ENCODE measurements at regions of chr11 and their contacts with region 1.

Region 1: DNA sequence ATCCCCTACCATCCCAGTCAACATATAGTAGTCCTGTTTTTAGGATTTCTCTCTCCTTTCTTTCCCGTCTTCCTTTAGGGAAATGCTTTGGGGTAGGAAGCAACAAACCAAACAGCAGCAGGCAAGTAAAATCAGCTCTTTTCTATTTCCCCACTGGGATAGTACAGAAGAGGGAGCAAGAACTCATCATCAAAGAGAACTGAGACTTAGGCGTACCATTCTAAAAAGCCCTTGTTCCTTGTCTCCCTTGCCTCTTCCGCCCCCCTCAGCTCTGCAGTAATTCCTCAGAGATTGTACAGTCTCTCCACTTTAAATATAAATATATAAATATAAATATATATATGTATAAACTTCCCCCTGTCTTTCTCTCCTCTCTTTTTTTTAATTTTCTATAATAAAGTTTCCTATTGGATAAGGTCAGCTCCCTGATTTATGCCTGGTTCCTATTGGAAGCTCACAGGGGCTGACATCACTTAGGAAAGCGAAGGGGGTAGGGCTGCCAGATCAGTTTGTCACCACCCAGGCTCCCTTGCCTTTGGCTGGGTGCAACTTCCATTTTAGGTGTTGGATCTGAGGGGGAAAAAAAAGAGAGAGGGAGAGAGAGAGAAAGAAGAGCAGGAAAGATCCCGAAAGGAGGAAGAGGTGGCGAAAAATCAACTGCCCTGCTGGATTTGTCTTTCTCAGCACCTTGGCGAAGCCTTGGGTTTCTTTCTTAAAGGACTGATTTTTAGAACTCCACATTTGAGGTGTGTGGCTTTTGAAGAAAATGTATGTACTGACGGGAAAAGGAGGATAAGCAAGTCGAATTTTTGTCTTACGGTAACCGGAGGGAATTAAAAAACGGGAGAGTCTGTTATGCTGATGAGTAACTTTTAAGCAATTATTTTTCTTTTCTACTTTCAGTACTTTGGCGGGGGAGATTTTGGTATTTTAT is at the start of gene CTNND1:
- DNase-seq: peak; percentile 75 to 93
- ATAC-seq: peak; percentile 96 to 99 (median 99)
- H3K4me3 ChIP-seq: peak within 1 kb of the TSS; percentile 4 to 84 (median 70)
- H3K27ac ChIP-seq: peak within 1 kb of the TSS; percentile 59 to 98 (median 94)
- H3K4me1 ChIP-seq: peaks cover 10 to 40% (median 27%) of the 10 kb centered on the region in 9 donors
- H3K27me3 ChIP-seq: no peaks in the 10 kb centered on the region
- CTCF ChIP-seq: peak in 1 of 9 donors; percentile 16
- total RNA-seq, gene CTNND1: 56.7 to 85.6 (median 65.2) TPM

Region 2: DNA sequence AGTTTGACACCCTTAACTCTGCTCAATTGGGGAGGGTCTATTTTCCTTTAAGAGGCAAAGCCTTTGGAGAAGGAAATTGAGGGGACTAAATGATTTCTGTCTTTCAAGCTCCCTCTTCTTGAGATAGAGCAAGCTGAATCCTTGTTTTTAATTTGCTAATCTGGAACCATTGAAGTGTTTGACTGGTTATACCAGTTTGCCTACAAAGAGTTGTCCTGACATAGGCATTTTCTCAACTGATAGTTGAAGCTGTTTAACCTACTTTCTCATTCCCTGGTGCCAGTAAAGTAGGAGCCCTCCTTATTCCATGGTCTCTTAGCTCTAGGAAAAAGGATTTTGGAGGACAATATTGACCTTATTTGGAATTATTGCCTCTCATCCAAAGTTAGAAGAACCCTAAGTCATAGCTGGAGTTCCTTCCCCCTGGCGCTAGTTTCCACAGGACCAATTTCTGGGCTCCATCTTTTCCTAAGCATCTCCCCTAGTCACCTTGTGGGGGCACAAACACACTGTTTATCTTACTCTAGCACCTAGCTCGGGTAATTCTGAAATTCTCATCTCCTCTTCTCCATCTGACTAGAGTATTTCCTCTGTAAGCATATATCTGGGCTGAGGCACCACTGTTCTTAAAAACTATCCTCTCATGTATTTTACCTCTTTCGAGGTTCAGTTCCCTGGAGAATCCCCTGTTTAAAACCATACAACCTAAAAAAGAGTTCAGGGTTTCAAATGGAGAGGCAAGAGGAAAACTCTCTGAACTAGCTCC is 86.2 kb before region 1 on chr11:
- intact Hi-C with region 1: no loop called
- DNase-seq: no peak
- ATAC-seq: no peak
- H3K4me3 ChIP-seq: no peak overlapping the region
- H3K27ac ChIP-seq: no peak overlapping the region
- H3K4me1 ChIP-seq: peaks cover 0 to 41% (median 17%) of the 10 kb centered on the region in 9 donors
- H3K27me3 ChIP-seq: no peaks in the 10 kb centered on the region
- CTCF ChIP-seq: no peak

Region 3: GRCh38 chr11:57741132-57742086 is 20.2 kb before region 1 on chr11 and contains the start of gene SELENOH:
- intact Hi-C with region 1: loop called in 1 of 10 experiments (anchors 1 kb)
- DNase-seq: peak; percentile 93 to 95
- ATAC-seq: peak; percentile 97 to 99 (median 98)
- H3K4me3 ChIP-seq: peak within 1 kb of the TSS; percentile 69 to 95 (median 84)
- H3K27ac ChIP-seq: peak within 1 kb of the TSS; percentile 90 to 99 (median 96)
- H3K4me1 ChIP-seq: peaks cover 2 to 32% (median 23%) of the 10 kb centered on the region in 9 donors
- H3K27me3 ChIP-seq: no peaks in the 10 kb centered on the region
- CTCF ChIP-seq: peak in 1 of 9 donors; percentile 8
- total RNA-seq, gene SELENOH: 69.8 to 99.0 (median 77.5) TPM

Region 4: DNA sequence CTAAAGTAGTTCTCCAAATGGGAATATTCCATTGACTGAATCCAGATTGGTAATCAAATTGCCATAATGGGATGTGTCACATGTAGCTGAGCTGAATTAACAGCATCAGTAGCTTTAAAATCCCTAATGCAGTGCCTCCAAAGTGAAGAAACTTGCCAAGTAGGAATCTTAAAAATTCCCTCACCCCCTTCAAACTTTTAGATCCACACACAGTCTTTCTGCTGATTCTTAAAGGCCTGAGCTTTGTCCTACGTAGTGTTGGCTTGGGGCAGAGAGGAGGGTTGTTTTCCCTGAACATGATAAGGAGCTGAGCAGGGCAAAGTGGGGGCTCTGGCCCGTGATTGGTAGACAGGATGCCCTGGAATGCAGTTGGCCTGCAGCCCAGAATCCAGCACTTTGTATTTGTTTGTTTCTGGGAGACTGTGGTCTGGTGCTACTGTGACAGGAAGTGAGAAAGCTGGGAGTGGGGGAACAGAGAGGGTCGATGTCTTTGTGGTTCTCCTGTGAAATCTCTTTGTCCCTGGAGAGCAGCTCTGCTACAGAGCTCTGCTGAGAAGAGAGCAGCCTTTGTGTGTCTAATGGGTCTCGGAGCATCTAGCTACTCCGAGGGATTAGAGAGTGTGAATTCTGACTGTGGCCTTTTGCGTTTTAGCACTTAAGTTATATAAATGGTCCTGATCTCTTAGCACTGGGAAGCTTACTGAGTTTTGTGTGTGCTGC is 16.9 kb after region 1 on chr11:
- intact Hi-C with region 1: loop called in 5 of 10 experiments (anchors 1 to 2 kb)
- DNase-seq: peak; percentile 88 to 96
- ATAC-seq: peak; percentile 88 to 94 (median 92)
- H3K4me3 ChIP-seq: peak overlapping the region in 8 of 10 donors; percentile 5 to 41 (median 34)
- H3K27ac ChIP-seq: peak overlapping the region; percentile 74 to 95 (median 90)
- H3K4me1 ChIP-seq: peaks cover 48 to 100% (median 98%) of the 10 kb centered on the region in 9 donors
- H3K27me3 ChIP-seq: no peaks in the 10 kb centered on the region
- CTCF ChIP-seq: no peak

Region 5: DNA sequence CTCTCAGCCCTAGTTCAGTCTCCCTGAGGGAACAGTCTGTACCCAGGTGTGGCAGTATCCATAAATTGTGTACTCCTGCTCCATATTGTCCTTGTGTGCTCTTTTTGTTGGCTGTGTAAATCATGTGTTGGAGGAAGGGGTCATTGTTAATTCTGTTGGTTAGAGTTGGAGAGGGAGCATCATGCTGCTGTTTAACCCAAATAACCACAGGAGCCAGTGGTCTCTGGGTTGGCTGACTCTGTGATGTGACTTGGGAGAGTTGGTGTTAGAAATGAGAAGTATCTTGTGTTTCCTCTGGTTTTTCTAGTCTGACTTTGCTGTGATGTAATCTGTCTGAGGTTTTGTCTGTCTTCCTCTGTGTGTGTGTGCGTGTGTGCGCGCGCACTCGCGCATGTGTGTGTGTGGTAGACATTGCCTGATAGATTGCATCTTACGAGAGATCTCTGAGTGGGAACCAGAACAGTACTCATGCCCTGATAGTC is 30.5 kb after region 1 on chr11:
- intact Hi-C with region 1: loop called in 4 of 10 experiments (anchors 2 to 5 kb)
- DNase-seq: peak; percentile 49 to 67
- ATAC-seq: peak; percentile 20 to 74 (median 65)
- H3K4me3 ChIP-seq: peak overlapping the region in 5 of 10 donors; percentile 3 to 30 (median 15)
- H3K27ac ChIP-seq: peak overlapping the region; percentile 9 to 86 (median 74)
- H3K4me1 ChIP-seq: peaks cover 14 to 90% (median 75%) of the 10 kb centered on the region in 9 donors
- H3K27me3 ChIP-seq: no peaks in the 10 kb centered on the region
- CTCF ChIP-seq: no peak

Measured in heart right ventricle (tissue), 16 donors.